PC-9 (cell line): ENCODE measurements at regions of chrX and their contacts with region 1.

Region 1: DNA sequence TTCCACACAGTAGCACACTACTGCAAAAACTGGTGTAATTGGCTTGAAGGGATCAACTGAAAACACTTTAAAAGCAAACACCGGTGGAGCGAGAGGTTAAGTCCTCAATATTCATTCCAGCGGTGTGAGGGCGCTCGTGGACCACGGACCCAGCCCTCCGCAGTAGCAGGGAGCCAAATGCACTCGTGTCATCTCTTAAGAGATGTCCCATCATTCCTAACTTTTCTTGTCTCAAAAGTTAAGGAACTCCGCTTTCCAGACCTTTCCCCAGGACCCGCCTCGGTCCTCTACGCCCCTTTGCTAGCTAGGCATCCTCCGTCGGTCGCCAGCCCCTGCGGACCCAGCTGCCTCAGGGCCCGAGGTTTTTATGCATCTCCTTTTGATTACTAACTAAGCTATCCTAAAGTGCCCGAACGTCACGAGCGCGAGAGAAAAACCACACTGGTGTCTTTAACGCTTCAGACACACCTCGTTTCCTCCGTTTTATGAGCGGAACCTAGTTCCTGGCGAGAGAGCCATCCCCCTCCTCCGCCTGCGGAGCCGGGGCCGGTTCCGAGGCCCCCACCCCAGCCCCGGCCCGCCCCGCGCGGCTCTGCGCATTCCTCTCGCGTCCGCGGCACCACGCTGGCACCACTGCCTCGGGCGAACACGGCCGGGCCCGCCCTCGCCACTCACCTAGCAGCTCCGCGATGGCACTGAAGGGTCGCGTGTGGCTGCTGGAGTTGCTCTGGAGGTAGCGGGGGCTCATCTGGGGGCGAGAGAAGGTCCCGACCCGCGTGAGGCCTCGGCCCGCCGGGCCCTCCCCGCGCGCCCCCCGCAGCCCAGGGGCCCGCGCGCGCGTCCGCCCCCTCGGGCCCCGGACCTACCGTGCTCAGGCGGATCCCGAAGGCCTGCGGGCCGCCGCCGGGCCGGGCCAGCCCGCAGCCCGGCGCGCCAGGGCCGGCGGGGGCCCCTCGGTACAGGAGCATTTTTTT is 723 bp downstream of the MORC4 start:
- DNase-seq: peak; percentile 47 to 48
- H3K4me3 ChIP-seq: peak overlapping the region; percentile 75
- H3K27ac ChIP-seq: no peak overlapping the region
- H3K4me1 ChIP-seq: 0 out of 2 replicates have a peak, but pooled peaks cover 6% of the 10 kb centered on the region
- H3K27me3 ChIP-seq: no peaks in the 10 kb centered on the region
- CTCF ChIP-seq: peak; percentile 66

Region 2: DNA sequence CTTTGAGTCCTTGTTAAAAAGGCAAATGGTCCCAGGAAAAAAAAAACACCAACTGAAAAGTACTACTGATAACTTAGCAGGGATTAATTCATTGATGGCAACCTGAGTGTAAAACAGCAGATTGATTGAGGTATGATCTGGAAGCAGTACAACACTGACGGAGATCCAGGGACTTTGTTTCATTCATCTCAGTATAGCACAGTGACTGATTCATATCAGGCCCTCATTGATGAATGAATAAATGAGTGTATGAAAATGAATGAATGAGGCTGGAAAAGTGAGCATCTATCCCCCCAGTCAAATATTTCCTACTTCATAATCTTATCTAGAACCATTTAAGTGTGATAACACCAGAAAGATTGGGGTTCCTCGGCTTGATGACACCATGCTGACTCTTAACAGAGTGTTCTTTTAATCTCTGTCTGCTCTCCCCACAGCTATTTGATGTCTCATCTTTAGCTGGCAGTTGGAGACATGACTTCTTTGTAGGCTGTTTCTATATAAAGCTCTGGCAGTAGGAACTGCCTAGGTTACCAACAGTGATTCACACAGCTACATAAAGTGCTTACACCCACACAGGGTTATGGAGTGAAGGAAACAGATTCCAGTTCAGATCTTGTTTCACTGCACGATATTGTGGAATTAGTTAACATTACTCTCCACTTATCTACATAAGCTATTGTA is 291.4 kb before region 1 on chrX:
- CTCF ChIA-PET with region 1: no interaction called
- POLR2A ChIA-PET with region 1: no interaction called
- intact Hi-C with region 1: no loop called
- DNase-seq: peak in 1 of 2 experiments; percentile 78
- H3K4me3 ChIP-seq: no peak overlapping the region
- H3K27ac ChIP-seq: peak overlapping the region; percentile 37; the same call in 1 of the 2 replicates
- H3K4me1 ChIP-seq: peaks cover 9% of the 10 kb centered on the region
- H3K27me3 ChIP-seq: no peaks in the 10 kb centered on the region
- CTCF ChIP-seq: no peak

Region 3: GRCh38 chrX:106973433-106974149 is 25.7 kb before region 1 on chrX:
- CTCF ChIA-PET with region 1: no interaction called
- POLR2A ChIA-PET with region 1: no interaction called
- intact Hi-C with region 1: no loop called
- DNase-seq: no peak
- H3K4me3 ChIP-seq: no peak overlapping the region
- H3K27ac ChIP-seq: no peak overlapping the region
- H3K4me1 ChIP-seq: no peaks in the 10 kb centered on the region
- H3K27me3 ChIP-seq: no peaks in the 10 kb centered on the region
- CTCF ChIP-seq: no peak

Region 4: GRCh38 chrX:107025545-107025944 is 26.3 kb after region 1 on chrX:
- CTCF ChIA-PET with region 1: no interaction called
- POLR2A ChIA-PET with region 1: no interaction called
- intact Hi-C with region 1: no loop called
- DNase-seq: no peak
- H3K4me3 ChIP-seq: no peak overlapping the region
- H3K27ac ChIP-seq: no peak overlapping the region
- H3K4me1 ChIP-seq: no peaks in the 10 kb centered on the region
- H3K27me3 ChIP-seq: no peaks in the 10 kb centered on the region
- CTCF ChIP-seq: peak; percentile 73

Region 5: GRCh38 chrX:107894038-107894437 is 894.7 kb after region 1 on chrX:
- CTCF ChIA-PET with region 1: no interaction called
- POLR2A ChIA-PET with region 1: no interaction called
- intact Hi-C with region 1: loop called (anchors 1 kb)
- DNase-seq: peak; percentile 32 to 74
- H3K4me3 ChIP-seq: no peak overlapping the region
- H3K27ac ChIP-seq: no peak overlapping the region
- H3K4me1 ChIP-seq: no peaks in the 10 kb centered on the region
- H3K27me3 ChIP-seq: no peaks in the 10 kb centered on the region
- CTCF ChIP-seq: peak; percentile 92